K562 (cell line): ENCODE measurements at regions of chr6 and their contacts with region 1.

Region 1: DNA sequence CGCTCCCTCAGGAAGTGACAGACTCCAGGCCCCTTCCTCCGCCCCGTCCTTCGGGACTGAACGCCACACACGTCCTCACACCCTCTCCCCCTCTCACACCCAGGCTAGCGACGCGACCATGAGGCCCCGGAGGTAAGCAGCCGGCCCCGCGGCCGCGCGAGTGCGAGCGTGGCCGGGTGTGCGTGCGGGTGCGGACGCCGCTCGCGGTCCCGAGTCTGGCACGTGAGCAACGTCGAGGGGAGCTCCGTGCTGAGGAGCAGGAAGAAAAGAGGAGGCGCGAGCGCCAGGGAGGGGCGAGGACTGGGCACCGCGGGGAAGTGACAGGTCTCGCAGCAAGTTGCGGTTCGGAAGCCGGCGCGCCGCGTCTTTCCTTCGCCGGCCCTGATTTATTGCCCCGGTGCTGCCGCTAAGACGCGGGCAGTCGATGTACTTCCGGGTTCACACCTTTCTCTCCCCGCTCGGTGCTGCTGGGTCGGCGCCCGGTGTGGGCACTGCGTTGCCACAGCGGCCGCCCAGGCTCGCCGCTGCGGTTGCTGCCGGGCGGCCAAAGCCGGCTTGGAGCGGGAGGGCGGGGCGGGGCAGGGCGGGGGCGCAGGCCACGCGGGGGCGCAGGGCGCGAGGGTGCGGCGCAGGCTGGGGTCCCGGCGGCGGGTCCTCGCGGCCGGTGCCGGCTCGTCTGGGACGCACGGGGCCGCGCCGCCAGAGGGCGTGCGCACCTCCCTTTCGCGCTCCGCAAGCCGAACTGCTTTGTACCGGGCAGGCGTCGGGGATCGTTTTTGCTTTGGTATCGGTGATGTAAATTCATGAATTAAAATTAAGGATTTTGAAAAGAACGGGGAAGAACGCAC is 15.8 kb upstream of the LIN28B start:
- DNase-seq: peak; percentile 77 to 80 (median 79)
- ATAC-seq: peak; percentile 98
- H3K4me3 ChIP-seq: peak overlapping the region; percentile 44
- H3K27ac ChIP-seq: peak overlapping the region; percentile 57; the same call in 2 of the 3 replicates
- H3K4me1 ChIP-seq: peaks cover 0 to 12% of the 10 kb centered on the region in 2 experiments; a peak in 2 of 5 replicates
- H3K27me3 ChIP-seq: no peaks in the 10 kb centered on the region
- CTCF ChIP-seq: peak; percentile 70 to 85 (median 75)
- EP300 ChIP-seq: no peak
- POLR2A ChIP-seq: no peak
- RAD21 ChIP-seq: peak; percentile 75 to 93

Region 2: GRCh38 chr6:104682722-104683643 is 258.1 kb before region 1 on chr6:
- CTCF ChIA-PET with region 1: no interaction called
- POLR2A ChIA-PET with region 1: no interaction called
- in situ Hi-C with region 1: no loop called
- intact Hi-C with region 1: loop called (anchors 10 kb)
- DNase-seq: peak; percentile 82 to 89 (median 82)
- ATAC-seq: peak; percentile 97
- H3K4me3 ChIP-seq: no peak overlapping the region
- H3K27ac ChIP-seq: no peak overlapping the region
- H3K4me1 ChIP-seq: no peaks in the 10 kb centered on the region; a peak in 1 of 5 replicates
- H3K27me3 ChIP-seq: no peaks in the 10 kb centered on the region
- CTCF ChIP-seq: peak; percentile 88 to 96 (median 94)
- EP300 ChIP-seq: no peak
- POLR2A ChIP-seq: no peak
- RAD21 ChIP-seq: peak; percentile 92 to 93

Region 3: GRCh38 chr6:104789770-104790190 is 151.3 kb before region 1 on chr6:
- CTCF ChIA-PET with region 1: no interaction called
- POLR2A ChIA-PET with region 1: no interaction called
- in situ Hi-C with region 1: no loop called
- intact Hi-C with region 1: loop called (anchors 10 kb)
- DNase-seq: peak in 3 of 4 experiments; percentile 13 to 52 (median 17)
- ATAC-seq: peak; percentile 92
- H3K4me3 ChIP-seq: no peak overlapping the region
- H3K27ac ChIP-seq: no peak overlapping the region
- H3K4me1 ChIP-seq: no peaks in the 10 kb centered on the region
- H3K27me3 ChIP-seq: no peaks in the 10 kb centered on the region
- CTCF ChIP-seq: peak; percentile 22 to 56 (median 41); a peak in 3 of 6 replicates
- EP300 ChIP-seq: no peak
- POLR2A ChIP-seq: no peak
- RAD21 ChIP-seq: peak; percentile 17 to 55; a peak in 2 of 4 replicates

Region 4: GRCh38 chr6:104896914-104897313 is 44.2 kb before region 1 on chr6:
- CTCF ChIA-PET with region 1: no interaction called
- POLR2A ChIA-PET with region 1: no interaction called
- in situ Hi-C with region 1: no loop called
- intact Hi-C with region 1: no loop called
- DNase-seq: no peak
- ATAC-seq: 0 out of 3 replicates have a peak, but pooled peaks have one; percentile 45
- H3K4me3 ChIP-seq: no peak overlapping the region
- H3K27ac ChIP-seq: no peak overlapping the region
- H3K4me1 ChIP-seq: no peaks in the 10 kb centered on the region
- H3K27me3 ChIP-seq: no peaks in the 10 kb centered on the region
- CTCF ChIP-seq: peak in 1 of 3 experiments; percentile 43; a peak in 2 of 6 replicates
- EP300 ChIP-seq: no peak
- POLR2A ChIP-seq: no peak
- RAD21 ChIP-seq: peak in 1 of 2 experiments; percentile 25; a peak in 1 of 4 replicates

Region 5: GRCh38 chr6:104955927-104956730 is 15.0 kb after region 1 on chr6:
- CTCF ChIA-PET with region 1: no interaction called
- POLR2A ChIA-PET with region 1: interaction called, 4 read pairs
- in situ Hi-C with region 1: no loop called
- intact Hi-C with region 1: loop called (anchors 1 kb)
- DNase-seq: peak; percentile 77 to 94 (median 80)
- ATAC-seq: peak; percentile 41
- H3K4me3 ChIP-seq: peak overlapping the region; percentile 56
- H3K27ac ChIP-seq: peak overlapping the region; percentile 98
- H3K4me1 ChIP-seq: peaks cover 6 to 8% of the 10 kb centered on the region in 2 experiments; a peak in 4 of 5 replicates
- H3K27me3 ChIP-seq: no peaks in the 10 kb centered on the region
- CTCF ChIP-seq: peak; percentile 10 to 36 (median 22); a peak in 2 of 6 replicates
- EP300 ChIP-seq: peak; percentile 76
- POLR2A ChIP-seq: peak; percentile 71
- RAD21 ChIP-seq: peak; percentile 22 to 44; a peak in 3 of 4 replicates

Region 6: GRCh38 chr6:104995989-104996617 is 55.0 kb after region 1 on chr6:
- CTCF ChIA-PET with region 1: interaction called, 5 read pairs
- POLR2A ChIA-PET with region 1: no interaction called
- in situ Hi-C with region 1: no loop called
- intact Hi-C with region 1: loop called (anchors 5 kb)
- DNase-seq: peak in 2 of 4 experiments; percentile 21 to 44
- ATAC-seq: peak; percentile 88
- H3K4me3 ChIP-seq: no peak overlapping the region
- H3K27ac ChIP-seq: peak overlapping the region; percentile 57; the same call in 2 of the 3 replicates
- H3K4me1 ChIP-seq: peaks cover 0 to 3% of the 10 kb centered on the region in 2 experiments; a peak in 1 of 5 replicates
- H3K27me3 ChIP-seq: no peaks in the 10 kb centered on the region
- CTCF ChIP-seq: peak in 1 of 3 experiments; percentile 53; a peak in 2 of 6 replicates
- EP300 ChIP-seq: no peak; the same call in 1 of the 2 replicates
- POLR2A ChIP-seq: no peak
- RAD21 ChIP-seq: peak; percentile 69 to 79

Region 7: GRCh38 chr6:105069821-105070445 is 128.8 kb after region 1 on chr6:
- CTCF ChIA-PET with region 1: no interaction called
- POLR2A ChIA-PET with region 1: no interaction called
- in situ Hi-C with region 1: loop called (anchors 5 kb)
- intact Hi-C with region 1: loop called (anchors 2 kb)
- DNase-seq: no peak
- ATAC-seq: no peak; the same call in 2 of the 3 replicates
- H3K4me3 ChIP-seq: no peak overlapping the region
- H3K27ac ChIP-seq: peak overlapping the region; percentile 8; the same call in 1 of the 3 replicates
- H3K4me1 ChIP-seq: peaks cover 13 to 29% of the 10 kb centered on the region in 2 experiments
- H3K27me3 ChIP-seq: no peaks in the 10 kb centered on the region
- CTCF ChIP-seq: no peak
- EP300 ChIP-seq: no peak
- POLR2A ChIP-seq: no peak
- RAD21 ChIP-seq: 0 out of 4 replicates have a peak, but pooled peaks of 1 of the 2 experiments have one; percentile 16

Region 8: GRCh38 chr6:105077596-105078385 is 136.7 kb after region 1 on chr6:
- CTCF ChIA-PET with region 1: interaction called, 43 read pairs
- POLR2A ChIA-PET with region 1: no interaction called
- in situ Hi-C with region 1: loop called (anchors 5 kb)
- intact Hi-C with region 1: loop called (anchors 1 kb)
- DNase-seq: peak; percentile 21 to 59 (median 23)
- ATAC-seq: peak; percentile 74
- H3K4me3 ChIP-seq: no peak overlapping the region
- H3K27ac ChIP-seq: no peak overlapping the region
- H3K4me1 ChIP-seq: 0 out of 5 replicates have a peak, but pooled peaks cover 0 to 1% of the 10 kb centered on the region in 2 experiments
- H3K27me3 ChIP-seq: no peaks in the 10 kb centered on the region
- CTCF ChIP-seq: peak; percentile 42 to 75 (median 50); a peak in 3 of 6 replicates
- EP300 ChIP-seq: no peak
- POLR2A ChIP-seq: no peak
- RAD21 ChIP-seq: peak; percentile 88 to 90